Body of pancreas (tissue), 4 donors: ENCODE measurements at regions of chr1 and their contacts with region 1.

Region 1: DNA sequence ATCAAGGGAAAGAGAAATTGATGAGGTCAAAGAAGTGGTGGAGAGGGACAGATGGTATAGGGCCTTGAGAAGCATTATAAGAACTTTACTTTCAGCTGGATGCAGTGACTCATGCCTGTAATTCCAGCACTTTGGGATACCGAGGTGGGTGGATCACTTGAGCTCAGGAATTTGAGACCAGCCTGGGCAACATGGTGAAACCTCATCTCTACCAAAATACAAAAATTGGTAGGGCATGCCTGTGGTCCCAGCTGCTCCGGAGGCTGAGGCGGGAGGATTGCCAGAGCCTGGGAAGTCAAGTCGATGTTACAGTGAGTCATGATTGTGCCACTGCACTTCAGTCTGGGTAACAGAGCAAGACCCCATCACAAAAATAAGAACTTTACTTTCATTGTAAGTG is 5.7 kb downstream of the TMEM50A start:
- DNase-seq: no peak
- ATAC-seq: no peak
- H3K4me3 ChIP-seq: no peak overlapping the region
- H3K27ac ChIP-seq: no peak overlapping the region
- H3K4me1 ChIP-seq: peaks cover 30% of the 10 kb centered on the region
- H3K27me3 ChIP-seq: no peaks in the 10 kb centered on the region
- CTCF ChIP-seq: no peak
- POLR2A ChIP-seq: no peak

Region 2: GRCh38 chr1:25253911-25254310 is 90.0 kb before region 1 on chr1:
- intact Hi-C with region 1: loop called (anchors 10 kb)
- DNase-seq: no peak
- ATAC-seq: no peak
- H3K4me3 ChIP-seq: no peak overlapping the region
- H3K27ac ChIP-seq: no peak overlapping the region
- H3K4me1 ChIP-seq: no peaks in the 10 kb centered on the region
- H3K27me3 ChIP-seq: no peaks in the 10 kb centered on the region
- CTCF ChIP-seq: no peak
- POLR2A ChIP-seq: no peak

Region 3: GRCh38 chr1:25476186-25477097 is 132.6 kb after region 1 on chr1:
- intact Hi-C with region 1: no loop called
- DNase-seq: no peak
- ATAC-seq: no peak
- H3K4me3 ChIP-seq: no peak overlapping the region
- H3K27ac ChIP-seq: peak overlapping the region in 1 of 4 donors; percentile 32
- H3K4me1 ChIP-seq: peaks cover 53% of the 10 kb centered on the region
- H3K27me3 ChIP-seq: no peaks in the 10 kb centered on the region
- CTCF ChIP-seq: no peak
- POLR2A ChIP-seq: no peak

Region 4: DNA sequence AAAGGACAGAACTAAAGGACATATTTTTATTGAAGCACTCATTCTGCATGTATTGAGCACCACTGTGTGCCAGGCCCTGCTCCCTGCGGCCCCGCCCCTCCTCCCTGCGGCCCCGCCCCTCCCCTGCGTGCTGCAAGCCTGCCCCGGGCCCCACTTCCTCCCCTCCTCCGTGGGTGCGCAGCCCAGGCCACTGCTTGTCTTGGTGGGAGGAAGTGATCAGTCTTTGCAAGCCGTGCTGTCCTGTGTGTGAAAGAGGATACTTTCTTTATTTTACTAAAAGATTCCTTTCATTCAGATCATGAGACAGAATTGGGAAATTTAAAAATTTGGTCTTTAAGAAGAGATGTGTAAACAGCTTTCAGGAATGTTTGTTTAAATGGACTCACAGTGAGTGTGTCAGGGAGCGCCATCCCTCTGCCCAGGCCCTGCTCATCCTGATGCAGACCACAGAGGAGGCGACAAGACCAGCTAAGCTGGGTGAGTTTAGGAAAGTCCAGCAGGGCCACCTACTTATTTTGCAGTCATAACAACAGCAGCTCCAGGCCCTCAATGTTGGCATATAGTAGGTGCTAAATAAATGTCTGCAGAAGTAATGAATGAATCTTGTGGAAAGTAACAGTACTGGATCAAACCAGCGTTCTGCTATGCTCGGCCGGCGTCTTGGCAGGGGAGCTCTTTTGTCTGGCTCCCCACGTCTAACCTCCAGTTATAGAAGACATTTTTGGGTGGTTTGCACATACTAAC is 367.9 kb after region 1 on chr1:
- intact Hi-C with region 1: no loop called
- DNase-seq: no peak
- ATAC-seq: no peak
- H3K4me3 ChIP-seq: no peak overlapping the region
- H3K27ac ChIP-seq: no peak overlapping the region
- H3K4me1 ChIP-seq: peaks cover 21% of the 10 kb centered on the region
- H3K27me3 ChIP-seq: no peaks in the 10 kb centered on the region
- CTCF ChIP-seq: no peak
- POLR2A ChIP-seq: no peak